Heart right ventricle (tissue), 16 donors: ENCODE measurements at regions of chr2 and their contacts with region 1.

Region 1: GRCh38 chr2:10408649-10409579 is 39.2 kb downstream of the ODC1 start:
- DNase-seq: peak; percentile 74 to 80
- ATAC-seq: peak; percentile 34 to 85 (median 74)
- H3K4me3 ChIP-seq: peak overlapping the region in 1 of 10 donors; percentile 19
- H3K27ac ChIP-seq: peak overlapping the region in 7 of 10 donors; percentile 17 to 76 (median 42)
- H3K4me1 ChIP-seq: peaks cover 22 to 74% (median 60%) of the 10 kb centered on the region in 9 donors
- H3K27me3 ChIP-seq: no peaks in the 10 kb centered on the region
- CTCF ChIP-seq: peak; percentile 93 to 99 (median 96)

Region 2: GRCh38 chr2:10122386-10123280 is 286.3 kb before region 1 on chr2 and contains the start of gene RRM2:
- intact Hi-C with region 1: loop called in 7 of 10 experiments (anchors 2 to 10 kb)
- DNase-seq: peak; percentile 92 to 93
- ATAC-seq: peak; percentile 89 to 94 (median 92)
- H3K4me3 ChIP-seq: peak within 1 kb of the TSS; percentile 39 to 77 (median 54)
- H3K27ac ChIP-seq: peak within 1 kb of the TSS in 1 of 10 donors; percentile 77
- H3K4me1 ChIP-seq: peaks cover 14 to 73% (median 29%) of the 10 kb centered on the region in 9 donors
- H3K27me3 ChIP-seq: peaks cover 11 to 27% (median 18%) of the 10 kb centered on the region in 7 donors
- CTCF ChIP-seq: no peak
- total RNA-seq, gene RRM2: 0.08 to 18.7 (median 1.3) TPM

Region 3: DNA sequence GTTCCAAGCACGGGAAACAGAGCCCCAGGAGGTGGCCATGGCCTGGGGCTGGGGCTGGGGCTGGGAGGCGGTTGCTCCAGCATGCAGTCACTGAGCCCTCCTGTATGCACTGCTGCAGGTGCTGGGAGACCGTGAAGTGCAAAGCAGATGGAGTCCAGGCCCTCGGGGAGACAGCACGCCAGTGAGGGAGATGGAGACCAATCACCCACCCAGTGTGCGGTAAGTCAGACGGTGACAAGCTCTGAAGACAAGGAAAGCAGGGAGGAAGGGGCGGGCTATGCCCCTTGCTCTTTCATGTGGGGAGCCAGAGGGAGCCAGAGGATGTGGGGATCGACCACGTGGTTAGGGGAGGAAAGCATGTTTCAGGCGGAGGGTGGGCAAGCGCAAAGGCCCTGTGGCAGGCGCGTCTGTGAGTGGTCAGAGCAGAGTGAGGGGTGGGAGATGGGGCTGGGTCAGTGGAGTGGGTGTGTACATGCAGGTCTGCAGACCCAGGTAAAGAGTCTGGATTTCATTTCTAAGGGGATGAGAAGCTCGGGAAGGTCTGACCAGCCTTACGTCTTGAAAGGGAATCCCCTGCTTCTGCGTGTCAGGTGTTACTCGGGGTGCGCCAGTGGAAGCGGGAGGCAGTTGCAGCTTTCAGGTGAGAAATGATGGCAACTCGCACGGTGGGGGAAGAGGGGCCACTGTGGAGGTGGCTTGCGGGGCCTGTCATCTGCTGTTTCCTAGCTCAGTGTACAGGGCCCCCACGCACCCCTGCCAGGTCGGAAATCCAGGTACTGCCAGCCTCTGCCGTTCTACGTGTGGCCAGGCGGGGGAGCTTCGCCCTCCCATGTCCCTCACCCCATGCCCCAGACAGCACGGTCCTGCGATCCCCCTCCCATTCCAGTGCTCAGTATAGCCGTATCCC is 266.9 kb before region 1 on chr2:
- intact Hi-C with region 1: loop called in 8 of 10 experiments (anchors 5 kb)
- DNase-seq: peak in 1 of 2 donors; percentile 38
- ATAC-seq: peak in 5 of 8 donors; percentile 32 to 59 (median 49)
- H3K4me3 ChIP-seq: no peak overlapping the region
- H3K27ac ChIP-seq: no peak overlapping the region
- H3K4me1 ChIP-seq: peaks cover 0 to 17% (median 9%) of the 10 kb centered on the region in 9 donors
- H3K27me3 ChIP-seq: no peaks in the 10 kb centered on the region
- CTCF ChIP-seq: peak; percentile 24 to 63 (median 56)

Region 4: GRCh38 chr2:10267551-10268465 is 141.1 kb before region 1 on chr2:
- intact Hi-C with region 1: loop called in 3 of 10 experiments (anchors 1 to 10 kb)
- DNase-seq: no peak
- ATAC-seq: peak in 7 of 8 donors; percentile 36 to 92 (median 62)
- H3K4me3 ChIP-seq: no peak overlapping the region
- H3K27ac ChIP-seq: no peak overlapping the region
- H3K4me1 ChIP-seq: peaks cover 0 to 9% (median 0%) of the 10 kb centered on the region in 9 donors
- H3K27me3 ChIP-seq: no peaks in the 10 kb centered on the region
- CTCF ChIP-seq: no peak

Region 5: GRCh38 chr2:10302479-10303180 is 106.3 kb before region 1 on chr2 and contains the start of gene HPCAL1:
- intact Hi-C with region 1: loop called in 9 of 10 experiments (anchors 2 to 10 kb)
- DNase-seq: peak; percentile 88 to 91
- ATAC-seq: peak; percentile 86 to 94 (median 92)
- H3K4me3 ChIP-seq: peak within 1 kb of the TSS; percentile 79 to 98 (median 84)
- H3K27ac ChIP-seq: peak within 1 kb of the TSS in 9 of 10 donors; percentile 67 to 90 (median 88)
- H3K4me1 ChIP-seq: peaks cover 0 to 65% (median 37%) of the 10 kb centered on the region in 9 donors
- H3K27me3 ChIP-seq: no peaks in the 10 kb centered on the region
- CTCF ChIP-seq: peak; percentile 33 to 85 (median 66)
- total RNA-seq, gene HPCAL1: 15.8 to 49.2 (median 22.8) TPM

Region 6: DNA sequence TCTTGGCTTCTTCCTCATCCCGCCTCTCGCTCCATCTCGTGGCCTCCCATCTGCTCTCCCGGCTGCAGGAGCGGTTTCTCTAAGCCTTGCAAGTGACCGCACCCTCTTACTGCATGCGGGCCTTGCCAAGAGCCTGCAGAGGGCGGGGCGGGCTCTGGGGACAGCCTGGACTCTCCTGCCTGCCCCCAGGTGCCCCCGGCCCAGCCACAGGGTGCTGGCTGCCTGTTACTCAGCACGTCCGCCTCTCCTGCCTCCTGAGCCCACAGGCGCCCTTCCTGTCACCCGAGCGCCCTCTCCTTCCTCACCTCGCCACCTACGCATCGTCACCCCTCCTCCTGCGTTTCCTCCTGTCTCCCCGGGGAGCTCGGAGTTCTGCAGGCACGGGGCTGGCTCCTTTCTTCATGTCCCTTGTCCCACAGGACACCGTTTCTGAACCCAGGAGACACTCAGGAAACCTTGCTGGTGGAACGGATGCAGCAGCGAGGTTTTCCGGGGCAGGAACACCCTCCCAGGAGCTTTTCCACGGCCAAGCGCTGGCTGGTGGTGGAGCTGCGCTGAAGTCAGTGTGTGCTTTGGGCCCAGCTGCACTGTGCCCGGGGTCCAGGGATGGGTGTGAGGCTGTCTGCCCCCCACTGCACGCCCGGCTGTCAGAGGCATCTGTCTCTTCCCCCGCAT is 77.8 kb before region 1 on chr2:
- intact Hi-C with region 1: loop called in 3 of 10 experiments (anchors 2 to 5 kb)
- DNase-seq: peak; percentile 57 to 77
- ATAC-seq: peak; percentile 45 to 88 (median 69)
- H3K4me3 ChIP-seq: peak overlapping the region in 7 of 10 donors; percentile 13 to 46 (median 32)
- H3K27ac ChIP-seq: peak overlapping the region in 8 of 10 donors; percentile 47 to 84 (median 65)
- H3K4me1 ChIP-seq: peaks cover 0 to 70% (median 66%) of the 10 kb centered on the region in 9 donors
- H3K27me3 ChIP-seq: no peaks in the 10 kb centered on the region
- CTCF ChIP-seq: peak in 4 of 9 donors; percentile 10 to 12 (median 11)

Region 7: DNA sequence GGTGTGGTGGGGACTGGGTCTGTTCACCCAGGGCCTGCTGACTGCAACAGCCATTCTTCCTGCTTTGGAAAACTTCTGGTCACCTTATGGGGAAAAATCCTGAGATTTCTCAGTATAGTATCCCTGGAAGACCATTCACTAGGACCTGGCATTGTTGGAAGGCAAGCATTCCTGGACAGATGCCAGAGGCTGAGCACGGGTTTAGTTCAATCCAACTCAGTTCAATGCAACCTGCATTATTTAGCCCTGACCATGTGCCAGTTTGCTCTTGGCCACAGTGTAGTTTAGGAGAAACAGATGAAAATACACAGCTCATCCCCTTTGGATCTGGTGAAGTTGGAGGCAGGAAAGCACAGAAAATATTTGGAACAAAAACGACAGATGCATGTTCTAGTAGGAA is 1433.4 kb after region 1 on chr2:
- intact Hi-C with region 1: no loop called
- DNase-seq: no peak
- ATAC-seq: peak in 2 of 8 donors; percentile 37 to 42
- H3K4me3 ChIP-seq: no peak overlapping the region
- H3K27ac ChIP-seq: no peak overlapping the region
- H3K4me1 ChIP-seq: peaks cover 0 to 5% (median 0%) of the 10 kb centered on the region in 9 donors
- H3K27me3 ChIP-seq: peaks cover 0 to 18% (median 0%) of the 10 kb centered on the region in 7 donors
- CTCF ChIP-seq: no peak